Esophagus squamous epithelium (tissue), 5 donors: ENCODE measurements at regions of chr7 and their contacts with region 1.

Region 1: DNA sequence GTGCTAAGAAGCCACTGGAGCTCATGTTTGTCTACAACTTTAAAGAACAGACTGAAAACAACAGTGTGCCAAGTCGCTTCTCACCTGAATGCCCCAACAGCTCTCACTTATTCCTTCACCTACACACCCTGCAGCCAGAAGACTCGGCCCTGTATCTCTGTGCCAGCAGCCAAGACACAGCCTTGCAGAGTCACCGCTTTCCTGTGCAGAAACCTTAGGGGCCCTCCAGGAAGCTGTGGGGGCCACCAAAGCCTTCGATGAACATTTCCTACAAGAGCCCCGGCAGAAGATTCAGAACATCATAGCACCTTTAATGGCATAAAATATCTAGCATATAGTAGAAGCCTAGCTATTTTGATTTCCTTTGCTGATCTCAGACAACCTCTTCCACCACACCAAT is 88.0 kb upstream of the PRSS58 start:
- DNase-seq: no peak
- H3K4me3 ChIP-seq: no peak overlapping the region
- H3K27ac ChIP-seq: no peak overlapping the region
- H3K4me1 ChIP-seq: no peaks in the 10 kb centered on the region
- H3K27me3 ChIP-seq: peaks cover 0 to 5% (median 0%) of the 10 kb centered on the region in 4 donors
- CTCF ChIP-seq: no peak
- POLR2A ChIP-seq: no peak

Region 2: GRCh38 chr7:142272841-142273240 is 73.0 kb before region 1 on chr7:
- intact Hi-C with region 1: no loop called
- DNase-seq: no peak
- H3K4me3 ChIP-seq: no peak overlapping the region
- H3K27ac ChIP-seq: no peak overlapping the region
- H3K4me1 ChIP-seq: no peaks in the 10 kb centered on the region
- H3K27me3 ChIP-seq: no peaks in the 10 kb centered on the region
- CTCF ChIP-seq: no peak
- POLR2A ChIP-seq: no peak

Region 3: DNA sequence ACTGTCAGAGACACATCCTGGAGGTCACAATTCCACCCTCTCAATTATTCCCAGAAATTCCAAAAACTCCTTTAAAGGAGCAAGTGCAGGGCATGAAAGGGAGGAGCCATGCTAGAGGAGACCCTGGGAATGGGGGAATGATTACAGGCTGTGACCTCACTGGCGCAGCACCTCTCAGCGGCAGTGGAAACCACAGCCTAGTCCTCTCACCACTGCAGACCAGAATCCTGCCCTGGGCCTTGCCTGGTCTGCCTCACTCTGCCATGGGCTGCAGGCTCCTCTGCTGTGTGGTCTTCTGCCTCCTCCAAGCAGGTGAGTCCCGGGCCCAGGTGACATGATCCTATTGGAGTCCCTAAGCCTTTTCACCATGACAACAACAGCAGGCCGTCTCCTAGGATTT is 37.5 kb before region 1 on chr7:
- intact Hi-C with region 1: loop called (anchors 2 kb)
- DNase-seq: no peak
- H3K4me3 ChIP-seq: no peak overlapping the region
- H3K27ac ChIP-seq: no peak overlapping the region
- H3K4me1 ChIP-seq: no peaks in the 10 kb centered on the region
- H3K27me3 ChIP-seq: peaks cover 0 to 3% (median 0%) of the 10 kb centered on the region in 4 donors
- CTCF ChIP-seq: no peak
- POLR2A ChIP-seq: no peak